Heart left ventricle (tissue), 16 donors: ENCODE measurements at regions of chr19 and their contacts with region 1.

Region 1: DNA sequence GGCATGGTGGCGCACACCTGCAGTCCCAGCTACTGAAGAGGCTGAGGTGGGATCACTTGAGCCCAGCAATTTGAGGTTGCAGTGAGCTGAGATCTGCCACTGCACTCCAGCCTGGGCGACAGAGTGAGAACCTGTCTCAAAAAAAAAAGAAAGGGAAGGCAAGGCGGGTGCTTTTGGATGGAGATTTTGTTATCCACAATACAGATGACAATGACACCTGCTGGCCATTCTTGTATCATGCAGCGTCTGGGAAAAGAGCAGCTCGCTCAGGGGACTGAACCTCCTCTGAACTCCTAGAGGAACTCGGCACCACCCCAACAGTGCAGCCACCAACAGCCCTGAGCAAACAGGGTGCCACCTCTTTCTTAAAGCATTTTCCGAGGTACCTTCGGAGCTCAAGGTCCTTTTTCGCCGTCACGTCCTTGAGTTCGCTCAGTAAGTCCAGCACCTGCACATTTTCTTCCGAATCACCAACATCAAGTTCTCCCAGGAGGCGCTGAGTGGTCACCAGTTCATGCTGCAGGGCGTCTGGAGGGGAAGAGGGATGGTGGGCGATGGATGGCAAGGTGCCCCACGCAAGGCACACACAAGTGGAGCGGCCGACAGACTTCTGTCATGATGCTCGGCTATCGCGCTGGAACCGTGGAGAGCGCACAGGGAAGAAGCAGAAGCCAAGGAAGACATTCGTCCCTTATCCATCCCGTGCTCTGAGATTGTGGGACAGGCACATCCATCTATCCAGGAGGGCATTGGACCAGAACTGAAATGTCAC is 22.6 kb downstream of the HAUS8 start:
- DNase-seq: peak in 2 of 5 donors; percentile 37 to 43
- ATAC-seq: peak; percentile 15 to 76 (median 65)
- H3K4me3 ChIP-seq: no peak overlapping the region
- H3K27ac ChIP-seq: no peak overlapping the region
- H3K4me1 ChIP-seq: no peaks in the 10 kb centered on the region
- H3K27me3 ChIP-seq: no peaks in the 10 kb centered on the region
- CTCF ChIP-seq: peak; percentile 32 to 75 (median 65)
- POLR2A ChIP-seq: no peak

Region 2: GRCh38 chr19:16714702-16715287 is 337.8 kb before region 1 on chr19:
- intact Hi-C with region 1: loop called in 3 of 10 experiments (anchors 2 to 10 kb)
- DNase-seq: peak in 2 of 5 donors; percentile 30 to 68
- ATAC-seq: peak in 1 of 4 donors; percentile 52
- H3K4me3 ChIP-seq: no peak overlapping the region
- H3K27ac ChIP-seq: no peak overlapping the region
- H3K4me1 ChIP-seq: no peaks in the 10 kb centered on the region
- H3K27me3 ChIP-seq: no peaks in the 10 kb centered on the region
- CTCF ChIP-seq: peak; percentile 43 to 77 (median 70)
- POLR2A ChIP-seq: no peak

Region 3: GRCh38 chr19:16771618-16772017 is 281.0 kb before region 1 on chr19:
- intact Hi-C with region 1: loop called (anchors 1 to 5 kb)
- DNase-seq: peak in 4 of 5 donors; percentile 69 to 84 (median 76)
- ATAC-seq: peak; percentile 71 to 88 (median 86)
- H3K4me3 ChIP-seq: no peak overlapping the region
- H3K27ac ChIP-seq: no peak overlapping the region
- H3K4me1 ChIP-seq: no peaks in the 10 kb centered on the region
- H3K27me3 ChIP-seq: no peaks in the 10 kb centered on the region
- CTCF ChIP-seq: peak; percentile 73 to 92 (median 84)
- POLR2A ChIP-seq: no peak

Region 4: GRCh38 chr19:16829010-16829821 is 223.4 kb before region 1 on chr19 and contains the start of gene SIN3B:
- intact Hi-C with region 1: loop called in 1 of 10 experiments (anchors 5 kb)
- DNase-seq: peak; percentile 83 to 93 (median 86)
- ATAC-seq: peak; percentile 60 to 92 (median 90)
- H3K4me3 ChIP-seq: peak within 1 kb of the TSS; percentile 61 to 99 (median 78)
- H3K27ac ChIP-seq: peak within 1 kb of the TSS; percentile 53 to 91 (median 75)
- H3K4me1 ChIP-seq: peaks cover 0 to 46% (median 23%) of the 10 kb centered on the region in 12 donors
- H3K27me3 ChIP-seq: no peaks in the 10 kb centered on the region
- CTCF ChIP-seq: no peak
- POLR2A ChIP-seq: peak; percentile 28 to 67
- total RNA-seq, gene SIN3B: 15.2 to 36.6 (median 24.7) TPM

Region 5: GRCh38 chr19:17021793-17022583 is 30.6 kb before region 1 on chr19:
- intact Hi-C with region 1: no loop called
- DNase-seq: no peak
- ATAC-seq: peak in 3 of 4 donors; percentile 41 to 55 (median 54)
- H3K4me3 ChIP-seq: no peak overlapping the region
- H3K27ac ChIP-seq: peak overlapping the region in 2 of 12 donors; percentile 23 to 60
- H3K4me1 ChIP-seq: peaks cover 0 to 38% (median 2%) of the 10 kb centered on the region in 12 donors
- H3K27me3 ChIP-seq: peaks cover 3 to 29% (median 20%) of the 10 kb centered on the region in 9 donors
- CTCF ChIP-seq: no peak
- POLR2A ChIP-seq: no peak